CD8-positive, alpha-beta T cell (primary cell): ENCODE measurements at regions of chr2 and their contacts with region 1.

Region 1: GRCh38 chr2:197434541-197435513 is at the start of gene SF3B1:
- DNase-seq: peak; percentile 98 to 100 (median 99)
- ATAC-seq: peak; percentile 96
- H3K4me3 ChIP-seq: peak within 1 kb of the TSS; percentile 95 to 99
- H3K4me3 Mint-ChIP-seq: peak within 1 kb of the TSS; percentile 100
- H3K27ac ChIP-seq: peak within 1 kb of the TSS; percentile 98 to 99
- H3K27ac Mint-ChIP-seq: peak within 1 kb of the TSS; percentile 100
- H3K4me1 ChIP-seq: peaks cover 43% of the 10 kb centered on the region
- H3K4me1 Mint-ChIP-seq: peaks cover 53% of the 10 kb centered on the region
- H3K27me3 ChIP-seq: no peaks in the 10 kb centered on the region
- H3K27me3 Mint-ChIP-seq: no peaks in the 10 kb centered on the region
- CTCF ChIP-seq: no peak
- total RNA-seq, gene SF3B1: 525 to 526 TPM

Region 2: DNA sequence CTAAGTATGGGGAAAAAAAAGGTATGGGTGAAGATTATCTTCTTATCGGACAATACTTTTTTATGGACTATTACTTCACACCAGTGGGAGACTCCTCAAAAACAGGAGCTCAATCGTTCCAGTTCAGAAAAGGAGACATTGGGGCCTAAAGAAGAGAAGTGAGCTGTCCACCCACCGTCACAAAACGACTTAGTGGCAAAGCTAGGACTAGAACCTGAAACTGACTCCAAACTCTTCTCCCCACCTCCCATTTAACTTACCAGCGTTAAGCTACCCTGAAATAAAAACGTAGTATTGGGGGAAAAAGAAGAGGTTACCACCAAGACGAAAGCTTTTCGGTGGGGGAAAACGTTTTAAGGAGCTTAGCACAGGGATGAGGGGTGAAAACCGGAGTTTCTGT is 635.8 kb before region 1 on chr2:
- CTCF ChIA-PET with region 1: no interaction called
- POLR2A ChIA-PET with region 1: no interaction called
- intact Hi-C with region 1: loop called (anchors 1 to 10 kb)
- DNase-seq: no peak
- ATAC-seq: peak; percentile 7
- H3K4me3 ChIP-seq: peak overlapping the region; percentile 71 to 76
- H3K4me3 Mint-ChIP-seq: peak overlapping the region; percentile 100
- H3K27ac ChIP-seq: peak overlapping the region; percentile 65 to 74
- H3K27ac Mint-ChIP-seq: peak overlapping the region; percentile 99
- H3K4me1 ChIP-seq: peaks cover 10% of the 10 kb centered on the region
- H3K4me1 Mint-ChIP-seq: peaks cover 36% of the 10 kb centered on the region
- H3K27me3 ChIP-seq: no peaks in the 10 kb centered on the region
- H3K27me3 Mint-ChIP-seq: peaks cover 12% of the 10 kb centered on the region
- CTCF ChIP-seq: no peak

Region 3: DNA sequence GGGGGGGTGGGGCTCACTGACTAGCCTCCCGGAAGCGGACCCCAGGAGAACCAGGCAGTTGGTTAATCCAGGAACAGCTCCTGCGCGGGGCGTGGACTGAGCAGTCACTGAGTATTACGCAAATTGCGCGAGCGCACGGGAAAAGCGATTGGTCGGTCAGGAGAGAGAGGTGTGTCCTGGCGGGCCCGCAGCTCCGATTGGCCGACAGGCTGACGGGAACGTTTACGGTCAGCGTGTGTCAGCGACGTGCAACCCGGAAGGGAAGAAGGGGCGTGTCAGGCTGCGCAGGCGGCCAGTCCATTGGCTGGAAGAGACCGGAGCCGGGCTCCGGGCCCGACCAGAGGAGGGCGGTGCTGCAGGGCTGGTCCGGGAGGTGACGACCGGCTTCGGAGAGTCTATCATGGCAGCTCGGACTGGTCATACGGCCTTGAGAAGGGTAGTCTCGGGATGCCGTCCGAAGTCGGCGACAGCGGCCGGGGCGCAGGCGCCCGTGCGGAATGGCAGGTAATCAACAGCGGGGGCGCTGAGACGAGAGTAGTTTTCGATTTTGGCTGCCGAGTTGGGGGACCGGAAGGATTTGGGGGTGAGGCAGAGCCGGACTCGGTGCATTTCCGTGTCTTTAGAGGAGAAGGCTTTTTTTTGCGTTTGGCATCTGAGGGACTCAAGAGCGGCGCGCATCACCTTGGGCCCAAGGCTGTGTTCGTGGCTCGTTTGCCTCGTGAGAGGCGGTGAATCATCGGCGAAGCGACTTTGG is 18.5 kb after region 1 on chr2 and contains the start of gene COQ10B:
- CTCF ChIA-PET with region 1: interaction called, 3 read pairs
- POLR2A ChIA-PET with region 1: interaction called, 97 read pairs
- intact Hi-C with region 1: loop called (anchors 1 kb)
- DNase-seq: peak; percentile 95 to 100 (median 97)
- ATAC-seq: peak; percentile 87
- H3K4me3 ChIP-seq: peak within 1 kb of the TSS; percentile 62 to 74
- H3K4me3 Mint-ChIP-seq: peak within 1 kb of the TSS; percentile 99
- H3K27ac ChIP-seq: peak within 1 kb of the TSS; percentile 93 to 95
- H3K27ac Mint-ChIP-seq: peak within 1 kb of the TSS; percentile 100
- H3K4me1 ChIP-seq: peaks cover 28% of the 10 kb centered on the region
- H3K4me1 Mint-ChIP-seq: peaks cover 48% of the 10 kb centered on the region
- H3K27me3 ChIP-seq: no peaks in the 10 kb centered on the region
- H3K27me3 Mint-ChIP-seq: no peaks in the 10 kb centered on the region
- CTCF ChIP-seq: no peak
- total RNA-seq, gene COQ10B: 66.9 to 67.6 TPM

Region 4: DNA sequence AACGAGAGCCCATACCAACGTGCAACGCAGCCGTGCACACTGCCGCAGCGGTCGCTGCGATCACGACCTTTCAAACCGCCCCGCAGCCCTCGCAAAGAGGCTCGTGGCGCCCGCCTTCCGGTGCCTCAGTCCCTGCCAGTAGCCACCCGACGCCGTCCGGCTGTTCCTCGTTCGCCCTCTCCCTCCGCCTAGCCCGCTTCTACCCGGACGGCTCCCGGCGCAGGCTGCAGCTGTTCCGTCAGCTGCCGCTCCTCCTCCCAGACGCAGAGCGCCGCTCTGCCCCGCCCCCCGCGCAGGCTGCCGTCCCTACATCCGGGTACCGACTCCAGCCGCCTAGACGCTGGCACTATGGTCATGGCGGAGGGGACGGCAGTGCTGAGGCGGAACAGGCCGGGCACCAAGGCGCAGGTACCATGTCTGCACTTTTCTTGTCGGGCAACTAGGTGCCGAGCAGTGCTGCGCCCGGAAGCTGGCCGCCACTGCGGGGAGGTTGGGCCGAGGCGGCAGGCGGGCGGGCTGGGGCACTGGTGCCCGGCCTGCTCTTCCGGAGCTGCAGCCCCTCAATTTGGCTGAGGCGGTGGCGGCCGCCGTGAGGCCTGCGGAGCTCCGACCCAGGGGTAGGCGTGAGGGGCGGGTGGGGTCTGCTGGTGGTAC is 81.0 kb after region 1 on chr2 and contains the start of gene MOB4:
- CTCF ChIA-PET with region 1: no interaction called
- POLR2A ChIA-PET with region 1: interaction called, 11 read pairs
- intact Hi-C with region 1: loop called (anchors 1 kb)
- DNase-seq: peak; percentile 90 to 97 (median 93)
- ATAC-seq: peak; percentile 90
- H3K4me3 ChIP-seq: peak within 1 kb of the TSS; percentile 73 to 94
- H3K4me3 Mint-ChIP-seq: peak within 1 kb of the TSS; percentile 92
- H3K27ac ChIP-seq: peak within 1 kb of the TSS; percentile 88 to 99
- H3K27ac Mint-ChIP-seq: peak within 1 kb of the TSS; percentile 93
- H3K4me1 ChIP-seq: peaks cover 22% of the 10 kb centered on the region
- H3K4me1 Mint-ChIP-seq: peaks cover 44% of the 10 kb centered on the region
- H3K27me3 ChIP-seq: no peaks in the 10 kb centered on the region
- H3K27me3 Mint-ChIP-seq: no peaks in the 10 kb centered on the region
- CTCF ChIP-seq: no peak
- total RNA-seq, gene MOB4: 32.1 to 36.5 TPM